Common myeloid progenitor, CD34-positive (primary cell): ENCODE measurements at regions of chr1 and their contacts with region 1.

Region 1: GRCh38 chr1:201042779-201043461 is 19.4 kb upstream of the KIF21B start:
- DNase-seq: peak; percentile 71 to 88 (median 82)
- H3K4me3 ChIP-seq: no peak overlapping the region
- H3K27ac ChIP-seq: no peak overlapping the region
- H3K4me1 ChIP-seq: peaks cover 0 to 2% (median 0%) of the 10 kb centered on the region in 4 experiments
- H3K27me3 ChIP-seq: peaks cover 0 to 6% (median 3%) of the 10 kb centered on the region in 5 experiments

Region 2: DNA sequence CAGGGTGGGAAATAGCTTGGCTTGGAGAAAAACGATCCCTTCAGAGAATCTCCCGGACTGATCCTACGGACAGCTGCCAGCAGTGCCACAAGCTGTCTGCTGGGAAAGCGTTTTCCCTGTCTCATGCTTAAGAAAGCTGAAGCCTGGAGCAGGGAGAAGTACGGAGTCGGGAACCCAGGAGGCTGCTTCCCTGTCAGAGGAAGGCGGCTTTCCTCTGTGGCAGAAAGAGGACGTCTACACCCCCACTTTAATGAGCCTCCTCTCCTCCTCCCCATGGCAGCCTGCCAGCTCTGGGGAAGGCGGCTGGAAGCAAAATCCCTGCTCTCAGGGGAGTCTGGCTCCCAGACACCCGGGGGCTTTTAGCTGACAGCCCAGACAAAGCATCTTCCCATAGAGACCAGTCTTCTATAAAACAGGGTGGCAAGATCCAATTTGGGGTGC is 26.7 kb before region 1 on chr1:
- CTCF ChIA-PET with region 1: interaction called, 35 read pairs
- POLR2A ChIA-PET with region 1: no interaction called
- DNase-seq: no peak
- H3K4me3 ChIP-seq: peak overlapping the region in 3 of 7 experiments; percentile 1 to 46 (median 6)
- H3K27ac ChIP-seq: peak overlapping the region in 1 of 2 experiments; percentile 27
- H3K4me1 ChIP-seq: peaks cover 23 to 95% (median 83%) of the 10 kb centered on the region in 4 experiments
- H3K27me3 ChIP-seq: no peaks in the 10 kb centered on the region

Region 3: GRCh38 chr1:201061049-201061448 is 18.1 kb after region 1 on chr1:
- CTCF ChIA-PET with region 1: no interaction called
- POLR2A ChIA-PET with region 1: no interaction called
- DNase-seq: no peak
- H3K4me3 ChIP-seq: no peak overlapping the region
- H3K27ac ChIP-seq: no peak overlapping the region
- H3K4me1 ChIP-seq: no peaks in the 10 kb centered on the region
- H3K27me3 ChIP-seq: peaks cover 0 to 4% (median 0%) of the 10 kb centered on the region in 5 experiments

Region 4: GRCh38 chr1:201517948-201518470 is 475.1 kb after region 1 on chr1:
- CTCF ChIA-PET with region 1: no interaction called
- POLR2A ChIA-PET with region 1: no interaction called
- DNase-seq: no peak
- H3K4me3 ChIP-seq: no peak overlapping the region
- H3K27ac ChIP-seq: no peak overlapping the region
- H3K4me1 ChIP-seq: no peaks in the 10 kb centered on the region
- H3K27me3 ChIP-seq: no peaks in the 10 kb centered on the region